Activated CD8-positive, alpha-beta T cell treated with anti-CD3 and anti-CD28 coated beads for 36 hours (primary cell): ENCODE measurements at regions of chr12 and their contacts with region 1.

Region 1: DNA sequence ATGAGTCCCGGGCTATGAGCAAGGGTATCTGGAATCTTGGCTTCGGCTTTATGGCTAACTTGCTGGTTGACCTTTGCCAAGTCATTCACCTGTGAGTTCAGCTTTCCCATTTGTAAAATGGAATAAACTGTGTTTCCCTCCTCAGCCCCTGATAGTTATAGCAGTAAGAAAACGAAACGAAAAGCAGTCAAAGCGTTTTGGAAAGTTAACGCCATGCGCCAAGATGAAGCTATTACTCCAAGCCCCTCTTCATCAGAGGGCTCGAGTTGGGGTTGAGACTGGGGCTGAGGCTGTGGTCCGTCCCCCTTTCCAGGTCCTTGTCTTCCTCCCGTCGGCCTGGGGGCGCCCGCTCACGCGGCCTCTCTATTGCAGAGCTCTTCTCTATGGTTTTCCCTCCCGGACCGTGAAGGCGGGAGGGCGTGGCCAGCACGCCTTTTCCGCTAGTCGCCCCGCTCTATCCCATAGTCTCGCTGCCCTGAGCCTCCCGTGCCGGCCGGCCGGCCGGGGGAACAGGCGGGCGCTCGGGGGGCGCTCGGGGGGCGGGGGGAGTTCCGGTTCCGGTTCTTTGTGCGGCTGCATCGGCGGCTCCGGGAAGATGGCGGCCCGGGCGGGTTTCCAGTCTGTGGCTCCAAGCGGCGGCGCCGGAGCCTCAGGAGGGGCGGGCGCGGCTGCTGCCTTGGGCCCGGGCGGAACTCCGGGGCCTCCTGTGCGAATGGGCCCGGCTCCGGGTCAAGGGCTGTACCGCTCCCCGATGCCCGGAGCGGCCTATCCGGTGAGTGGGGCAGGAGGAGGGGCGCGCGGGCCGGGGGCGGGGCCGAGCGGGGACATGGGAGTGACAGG is at the start of gene SMARCD1:
- DNase-seq: peak; percentile 90
- ATAC-seq: peak; percentile 88
- H3K4me3 Mint-ChIP-seq: peak within 1 kb of the TSS; percentile 90
- H3K27ac Mint-ChIP-seq: peak within 1 kb of the TSS; percentile 93
- H3K4me1 Mint-ChIP-seq: peaks cover 44% of the 10 kb centered on the region
- H3K27me3 Mint-ChIP-seq: no peaks in the 10 kb centered on the region
- CTCF ChIP-seq: no peak
- total RNA-seq, gene SMARCD1: 47.3 to 55.1 TPM

Region 2: DNA sequence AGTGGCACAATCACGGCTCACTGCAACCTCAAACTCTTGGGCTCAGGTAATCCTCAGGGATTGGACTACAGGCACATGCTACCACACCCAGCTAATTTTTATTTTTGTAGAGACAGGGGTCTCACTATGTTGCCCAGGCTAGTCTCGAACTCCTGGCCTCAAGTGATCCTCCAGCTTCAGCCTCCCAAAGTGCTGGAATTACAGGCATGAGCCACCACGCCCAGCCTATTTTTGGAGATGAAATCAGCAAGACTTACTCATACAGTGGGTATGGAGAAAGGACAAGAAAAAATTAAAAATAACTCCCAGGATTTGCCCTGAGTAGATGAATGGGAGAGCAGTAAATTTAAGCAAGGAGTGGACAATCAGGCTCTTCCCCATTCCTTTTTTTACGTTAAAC is 391.0 kb before region 1 on chr12:
- CTCF ChIA-PET with region 1: no interaction called
- POLR2A ChIA-PET with region 1: no interaction called
- intact Hi-C with region 1: no loop called
- DNase-seq: no peak
- ATAC-seq: no peak
- H3K4me3 Mint-ChIP-seq: no peak overlapping the region
- H3K27ac Mint-ChIP-seq: no peak overlapping the region
- H3K4me1 Mint-ChIP-seq: peaks cover 45% of the 10 kb centered on the region
- H3K27me3 Mint-ChIP-seq: no peaks in the 10 kb centered on the region
- CTCF ChIP-seq: no peak

Region 3: GRCh38 chr12:50103767-50104321 is 18.8 kb after region 1 on chr12 and contains the start of gene GPD1:
- CTCF ChIA-PET with region 1: interaction called, 32 read pairs
- POLR2A ChIA-PET with region 1: interaction called, 5 read pairs
- intact Hi-C with region 1: no loop called
- DNase-seq: peak; percentile 50
- ATAC-seq: peak; percentile 84
- H3K4me3 Mint-ChIP-seq: no peak within 1 kb of the TSS
- H3K27ac Mint-ChIP-seq: peak within 1 kb of the TSS; percentile 20
- H3K4me1 Mint-ChIP-seq: no peaks in the 10 kb centered on the region
- H3K27me3 Mint-ChIP-seq: no peaks in the 10 kb centered on the region
- CTCF ChIP-seq: no peak
- total RNA-seq, gene GPD1: 0.16 to 0.20 TPM

Region 4: GRCh38 chr12:50167041-50167828 is 82.2 kb after region 1 on chr12 and contains the start of gene CERS5:
- CTCF ChIA-PET with region 1: interaction called, 12 read pairs
- POLR2A ChIA-PET with region 1: interaction called, 4 read pairs
- intact Hi-C with region 1: no loop called
- DNase-seq: peak; percentile 99
- ATAC-seq: peak; percentile 99
- H3K4me3 Mint-ChIP-seq: peak within 1 kb of the TSS; percentile 85
- H3K27ac Mint-ChIP-seq: peak within 1 kb of the TSS; percentile 96
- H3K4me1 Mint-ChIP-seq: peaks cover 25% of the 10 kb centered on the region
- H3K27me3 Mint-ChIP-seq: no peaks in the 10 kb centered on the region
- CTCF ChIP-seq: no peak
- total RNA-seq, gene CERS5: 33.9 to 39.5 TPM

Region 5: GRCh38 chr12:50351120-50352043 is 266.4 kb after region 1 on chr12:
- CTCF ChIA-PET with region 1: no interaction called
- POLR2A ChIA-PET with region 1: no interaction called
- intact Hi-C with region 1: no loop called
- DNase-seq: no peak
- ATAC-seq: no peak
- H3K4me3 Mint-ChIP-seq: no peak overlapping the region
- H3K27ac Mint-ChIP-seq: no peak overlapping the region
- H3K4me1 Mint-ChIP-seq: no peaks in the 10 kb centered on the region
- H3K27me3 Mint-ChIP-seq: no peaks in the 10 kb centered on the region
- CTCF ChIP-seq: no peak